CD4-positive, alpha-beta memory T cell (primary cell): ENCODE measurements at regions of chr11 and their contacts with region 1.

Region 1: DNA sequence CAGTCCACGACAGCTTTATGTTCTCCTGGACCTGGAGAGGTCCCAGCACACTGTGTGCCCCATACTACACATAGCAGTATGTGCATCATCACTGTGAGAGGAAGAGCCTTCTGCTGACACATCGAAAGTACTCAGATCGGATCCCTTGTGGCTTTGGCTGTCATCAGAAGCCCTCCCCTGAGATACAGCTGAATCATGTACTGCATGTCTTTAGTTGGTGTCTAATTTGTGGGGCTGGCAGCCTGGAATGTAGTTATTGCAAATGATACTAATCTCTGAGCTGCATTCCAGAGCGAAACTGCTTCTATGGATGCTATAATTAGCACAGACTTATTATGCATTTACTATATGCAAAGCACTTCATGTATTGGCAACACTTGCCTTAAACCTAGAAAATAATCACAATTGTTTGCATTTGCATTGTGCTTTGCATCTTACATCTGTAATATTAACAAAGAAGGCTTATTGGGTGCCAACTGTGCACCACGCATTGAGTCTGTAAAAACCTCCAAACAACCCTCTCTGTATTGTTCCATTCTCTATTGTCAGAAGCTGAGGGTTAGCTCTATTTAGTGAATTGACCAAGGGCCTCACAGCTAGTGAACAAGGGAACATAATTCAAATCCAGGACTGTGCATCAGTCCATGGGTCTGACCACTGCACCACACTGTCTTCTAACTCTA is 89.2 kb upstream of the CRTAM start:
- DNase-seq: peak; percentile 31 to 70 (median 49)
- H3K4me3 ChIP-seq: no peak overlapping the region
- H3K4me3 Mint-ChIP-seq: peak overlapping the region in 5 of 8 donors; percentile 19 to 56 (median 47)
- H3K27ac ChIP-seq: no peak overlapping the region
- H3K27ac Mint-ChIP-seq: peak overlapping the region in 5 of 7 donors; percentile 31 to 78 (median 65)
- H3K4me1 ChIP-seq: peaks cover 56% of the 10 kb centered on the region
- H3K4me1 Mint-ChIP-seq: peaks cover 20 to 60% (median 40%) of the 10 kb centered on the region in 4 donors
- H3K27me3 ChIP-seq: no peaks in the 10 kb centered on the region
- H3K27me3 Mint-ChIP-seq: no peaks in the 10 kb centered on the region

Region 2: DNA sequence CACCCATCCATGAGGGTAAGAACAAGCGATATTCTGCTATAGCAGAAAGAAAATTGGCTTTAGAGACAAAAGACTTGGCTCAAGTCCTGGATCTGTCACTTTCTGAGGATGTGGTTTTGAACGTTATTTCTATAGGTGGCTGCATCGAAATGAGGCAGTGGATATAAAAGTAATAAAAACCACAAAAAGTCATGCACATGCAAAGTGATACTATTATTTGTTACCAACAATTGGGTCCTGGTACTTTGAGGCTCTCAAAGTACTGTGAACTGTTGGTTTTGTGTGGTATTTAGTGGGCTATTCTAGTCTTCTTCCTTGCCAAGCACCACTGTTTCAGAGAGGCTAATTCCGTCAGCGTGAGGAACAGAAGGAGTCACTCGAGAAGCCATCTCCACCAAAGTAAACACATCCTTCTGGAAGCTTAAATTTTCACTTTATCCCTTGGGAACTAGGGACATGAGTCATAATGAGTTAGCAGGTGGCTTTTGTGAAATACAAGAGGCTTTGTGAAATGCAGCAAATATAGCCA is 80.5 kb before region 1 on chr11:
- CTCF ChIA-PET with region 1: interaction called, 440 read pairs
- POLR2A ChIA-PET with region 1: interaction called, 82 read pairs
- intact Hi-C with region 1: no loop called
- DNase-seq: peak in 4 of 5 donors; percentile 51 to 62 (median 54)
- H3K4me3 ChIP-seq: peak overlapping the region in 1 of 2 donors; percentile 24
- H3K4me3 Mint-ChIP-seq: peak overlapping the region; percentile 22 to 88 (median 68)
- H3K27ac ChIP-seq: peak overlapping the region; percentile 15
- H3K27ac Mint-ChIP-seq: peak overlapping the region; percentile 73 to 93 (median 88)
- H3K4me1 ChIP-seq: peaks cover 80% of the 10 kb centered on the region
- H3K4me1 Mint-ChIP-seq: peaks cover 49 to 84% (median 69%) of the 10 kb centered on the region in 4 donors
- H3K27me3 ChIP-seq: no peaks in the 10 kb centered on the region
- H3K27me3 Mint-ChIP-seq: no peaks in the 10 kb centered on the region

Region 3: DNA sequence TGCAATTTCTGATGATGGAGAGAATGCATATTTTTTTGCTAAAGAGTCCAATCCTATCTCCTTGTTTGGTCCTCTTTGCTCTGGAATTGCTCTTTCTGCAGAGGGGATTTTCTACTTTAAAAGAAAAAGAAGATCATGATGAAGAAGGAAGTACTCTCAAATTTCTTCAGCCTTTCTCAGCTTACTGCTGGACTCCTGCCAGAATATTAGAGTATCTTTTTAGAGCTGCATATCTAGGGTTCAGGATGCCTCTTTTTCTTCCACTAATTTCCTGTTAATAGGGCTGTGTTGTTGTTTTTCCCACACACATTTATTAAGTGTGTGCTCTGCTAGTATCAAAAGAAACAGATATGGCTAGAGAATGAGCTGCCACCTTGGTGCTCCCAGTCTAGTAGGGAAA is 75.4 kb before region 1 on chr11:
- CTCF ChIA-PET with region 1: interaction called, 440 read pairs
- POLR2A ChIA-PET with region 1: interaction called, 82 read pairs
- intact Hi-C with region 1: no loop called
- DNase-seq: no peak
- H3K4me3 ChIP-seq: no peak overlapping the region
- H3K4me3 Mint-ChIP-seq: peak overlapping the region in 4 of 8 donors; percentile 22 to 60 (median 34)
- H3K27ac ChIP-seq: no peak overlapping the region
- H3K27ac Mint-ChIP-seq: peak overlapping the region in 6 of 7 donors; percentile 36 to 77 (median 61)
- H3K4me1 ChIP-seq: peaks cover 90% of the 10 kb centered on the region
- H3K4me1 Mint-ChIP-seq: peaks cover 50 to 91% (median 72%) of the 10 kb centered on the region in 4 donors
- H3K27me3 ChIP-seq: no peaks in the 10 kb centered on the region
- H3K27me3 Mint-ChIP-seq: no peaks in the 10 kb centered on the region

Region 4: GRCh38 chr11:122690801-122691548 is 58.2 kb before region 1 on chr11:
- CTCF ChIA-PET with region 1: interaction called, 86 read pairs
- POLR2A ChIA-PET with region 1: interaction called, 131 read pairs
- intact Hi-C with region 1: no loop called
- DNase-seq: peak in 3 of 5 donors; percentile 14 to 26 (median 18)
- H3K4me3 ChIP-seq: peak overlapping the region in 1 of 2 donors; percentile 40
- H3K4me3 Mint-ChIP-seq: peak overlapping the region; percentile 74 to 88 (median 76)
- H3K27ac ChIP-seq: peak overlapping the region; percentile 63
- H3K27ac Mint-ChIP-seq: peak overlapping the region; percentile 92 to 94 (median 93)
- H3K4me1 ChIP-seq: peaks cover 76% of the 10 kb centered on the region
- H3K4me1 Mint-ChIP-seq: peaks cover 55 to 87% (median 73%) of the 10 kb centered on the region in 4 donors
- H3K27me3 ChIP-seq: no peaks in the 10 kb centered on the region
- H3K27me3 Mint-ChIP-seq: no peaks in the 10 kb centered on the region

Region 5: DNA sequence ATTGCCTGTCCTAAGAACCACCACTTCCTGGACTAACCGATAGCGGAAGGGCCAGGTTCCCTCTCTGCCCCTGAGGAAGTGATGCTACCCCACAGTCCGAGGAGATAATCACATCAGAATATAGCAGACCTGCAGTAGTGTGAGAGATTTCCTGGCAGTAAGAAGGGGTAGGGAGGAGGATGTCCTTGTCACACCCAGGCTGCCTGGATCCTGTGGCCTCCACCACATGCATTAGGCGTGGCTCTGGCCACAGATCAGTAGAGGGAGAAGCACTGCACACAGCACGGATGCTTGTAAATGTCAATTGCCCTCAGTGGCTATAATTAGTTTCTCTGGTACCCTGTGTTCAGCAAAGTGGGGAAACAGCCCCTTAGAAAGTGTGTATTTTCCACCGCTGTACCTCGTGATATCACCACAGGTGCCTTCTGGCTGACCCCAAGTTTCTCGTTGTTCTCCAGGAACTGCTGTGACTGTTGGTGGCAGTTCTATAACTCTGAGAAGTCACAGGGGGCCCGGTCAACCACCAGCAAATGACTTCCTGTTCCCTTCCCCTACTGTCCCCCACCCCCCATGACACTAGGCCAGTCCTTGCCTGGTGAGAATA is 31.8 kb before region 1 on chr11:
- CTCF ChIA-PET with region 1: interaction called, 32 read pairs
- POLR2A ChIA-PET with region 1: interaction called, 12 read pairs
- intact Hi-C with region 1: loop called (anchors 5 kb)
- DNase-seq: peak in 2 of 5 donors; percentile 8 to 19
- H3K4me3 ChIP-seq: no peak overlapping the region
- H3K4me3 Mint-ChIP-seq: peak overlapping the region in 5 of 8 donors; percentile 11 to 37 (median 24)
- H3K27ac ChIP-seq: no peak overlapping the region
- H3K27ac Mint-ChIP-seq: peak overlapping the region; percentile 74 to 92 (median 85)
- H3K4me1 ChIP-seq: peaks cover 41% of the 10 kb centered on the region
- H3K4me1 Mint-ChIP-seq: peaks cover 39 to 72% (median 57%) of the 10 kb centered on the region in 4 donors
- H3K27me3 ChIP-seq: no peaks in the 10 kb centered on the region
- H3K27me3 Mint-ChIP-seq: no peaks in the 10 kb centered on the region

Region 6: GRCh38 chr11:122727101-122727929 is 21.8 kb before region 1 on chr11:
- CTCF ChIA-PET with region 1: interaction called, 46 read pairs
- POLR2A ChIA-PET with region 1: interaction called, 64 read pairs
- intact Hi-C with region 1: loop called (anchors 2 kb)
- DNase-seq: peak in 4 of 5 donors; percentile 38 to 50 (median 47)
- H3K4me3 ChIP-seq: peak overlapping the region; percentile 9 to 38
- H3K4me3 Mint-ChIP-seq: peak overlapping the region; percentile 79 to 93 (median 88)
- H3K27ac ChIP-seq: peak overlapping the region; percentile 59
- H3K27ac Mint-ChIP-seq: peak overlapping the region; percentile 92 to 99 (median 95)
- H3K4me1 ChIP-seq: peaks cover 67% of the 10 kb centered on the region
- H3K4me1 Mint-ChIP-seq: peaks cover 51 to 66% (median 59%) of the 10 kb centered on the region in 4 donors
- H3K27me3 ChIP-seq: no peaks in the 10 kb centered on the region
- H3K27me3 Mint-ChIP-seq: no peaks in the 10 kb centered on the region

Region 7: GRCh38 chr11:122733318-122733717 is 15.8 kb before region 1 on chr11:
- CTCF ChIA-PET with region 1: interaction called, 46 read pairs
- POLR2A ChIA-PET with region 1: interaction called, 64 read pairs
- intact Hi-C with region 1: no loop called
- DNase-seq: no peak
- H3K4me3 ChIP-seq: no peak overlapping the region
- H3K4me3 Mint-ChIP-seq: peak overlapping the region in 2 of 8 donors; percentile 15 to 39
- H3K27ac ChIP-seq: no peak overlapping the region
- H3K27ac Mint-ChIP-seq: peak overlapping the region in 2 of 7 donors; percentile 32 to 57
- H3K4me1 ChIP-seq: peaks cover 58% of the 10 kb centered on the region
- H3K4me1 Mint-ChIP-seq: peaks cover 12 to 40% (median 26%) of the 10 kb centered on the region in 4 donors
- H3K27me3 ChIP-seq: no peaks in the 10 kb centered on the region
- H3K27me3 Mint-ChIP-seq: no peaks in the 10 kb centered on the region

Region 8: GRCh38 chr11:122882857-122883645 is 133.9 kb after region 1 on chr11:
- CTCF ChIA-PET with region 1: no interaction called
- POLR2A ChIA-PET with region 1: no interaction called
- intact Hi-C with region 1: no loop called
- DNase-seq: peak; percentile 43 to 53 (median 52)
- H3K4me3 ChIP-seq: peak overlapping the region; percentile 42 to 56
- H3K4me3 Mint-ChIP-seq: peak overlapping the region; percentile 83 to 91 (median 88)
- H3K27ac ChIP-seq: peak overlapping the region; percentile 63
- H3K27ac Mint-ChIP-seq: peak overlapping the region; percentile 64 to 93 (median 79)
- H3K4me1 ChIP-seq: peaks cover 20% of the 10 kb centered on the region
- H3K4me1 Mint-ChIP-seq: peaks cover 20 to 26% (median 24%) of the 10 kb centered on the region in 4 donors
- H3K27me3 ChIP-seq: no peaks in the 10 kb centered on the region
- H3K27me3 Mint-ChIP-seq: no peaks in the 10 kb centered on the region